CD8-positive, alpha-beta T cell (primary cell): ENCODE measurements at regions of chr11 and their contacts with region 1.

Region 1: GRCh38 chr11:615504-616319 is at the start of gene IRF7:
- DNase-seq: peak; percentile 65 to 92 (median 87)
- ATAC-seq: peak; percentile 72
- H3K4me3 ChIP-seq: peak within 1 kb of the TSS; percentile 84 to 92
- H3K4me3 Mint-ChIP-seq: peak within 1 kb of the TSS; percentile 92
- H3K27ac ChIP-seq: peak within 1 kb of the TSS; percentile 83 to 95
- H3K27ac Mint-ChIP-seq: peak within 1 kb of the TSS; percentile 94
- H3K4me1 ChIP-seq: peaks cover 30% of the 10 kb centered on the region
- H3K4me1 Mint-ChIP-seq: peaks cover 10% of the 10 kb centered on the region
- H3K27me3 ChIP-seq: no peaks in the 10 kb centered on the region
- H3K27me3 Mint-ChIP-seq: no peaks in the 10 kb centered on the region
- CTCF ChIP-seq: no peak
- total RNA-seq, gene IRF7: 102 to 106 TPM

Region 2: DNA sequence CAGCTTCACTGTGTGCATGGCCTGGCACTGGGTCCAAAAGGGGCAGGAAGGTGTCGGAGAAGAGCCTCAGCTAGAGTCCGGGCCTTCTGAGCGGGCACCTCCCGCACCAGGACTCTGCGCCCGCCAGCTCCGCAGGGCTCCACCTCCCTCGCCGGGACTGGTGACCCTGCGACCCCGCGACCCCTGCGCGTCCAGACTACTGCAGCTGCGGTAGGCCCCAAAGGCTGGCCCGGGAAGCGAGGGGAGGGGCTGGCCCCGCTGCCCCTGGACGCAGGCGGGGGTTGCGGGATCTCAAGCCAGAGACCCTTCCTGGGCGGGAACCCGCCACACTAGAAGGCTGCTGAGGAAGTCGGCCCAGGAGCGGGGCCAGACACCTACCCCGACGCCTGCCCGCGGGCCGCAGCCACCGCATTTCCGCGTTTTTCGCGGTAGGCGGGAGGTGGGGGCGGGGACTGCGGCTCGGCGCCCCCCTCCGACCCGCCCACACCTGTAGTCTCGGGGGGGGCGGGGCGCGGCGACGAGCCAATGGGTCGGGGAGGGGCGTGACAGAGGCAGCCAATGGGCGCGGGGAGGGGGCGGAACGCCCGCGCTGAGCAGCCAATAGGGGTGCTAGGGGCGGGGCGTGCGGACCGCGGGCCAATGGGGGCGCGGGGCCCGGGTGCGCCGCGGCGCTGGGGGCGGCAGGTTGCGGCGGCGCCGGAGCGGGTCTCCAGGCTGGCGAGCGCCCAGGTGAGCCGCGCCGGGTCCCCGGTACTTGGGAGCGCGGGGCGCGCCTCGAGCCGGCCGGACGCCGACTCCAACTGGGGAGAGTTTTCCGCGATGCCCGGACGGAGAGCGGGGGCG is 55.2 kb before region 1 on chr11 and contains the starts of genes LMNTD2 and RASSF7:
- CTCF ChIA-PET with region 1: no interaction called
- POLR2A ChIA-PET with region 1: no interaction called
- intact Hi-C with region 1: loop called (anchors 1 to 2 kb)
- DNase-seq: peak; percentile 92 to 98 (median 95)
- ATAC-seq: peak; percentile 94
- H3K4me3 ChIP-seq: peak within 1 kb of the TSS; percentile 51 to 94
- H3K4me3 Mint-ChIP-seq: peak within 1 kb of the TSS; percentile 88
- H3K27ac ChIP-seq: peak within 1 kb of the TSS; percentile 51 to 76
- H3K27ac Mint-ChIP-seq: peak within 1 kb of the TSS; percentile 84
- H3K4me1 ChIP-seq: peaks cover 19% of the 10 kb centered on the region
- H3K4me1 Mint-ChIP-seq: peaks cover 18% of the 10 kb centered on the region
- H3K27me3 ChIP-seq: no peaks in the 10 kb centered on the region
- H3K27me3 Mint-ChIP-seq: no peaks in the 10 kb centered on the region
- CTCF ChIP-seq: no peak
- total RNA-seq, gene LMNTD2: 4.2 to 5.6 TPM
- total RNA-seq, gene RASSF7: 11.8 to 15.3 TPM

Region 3: DNA sequence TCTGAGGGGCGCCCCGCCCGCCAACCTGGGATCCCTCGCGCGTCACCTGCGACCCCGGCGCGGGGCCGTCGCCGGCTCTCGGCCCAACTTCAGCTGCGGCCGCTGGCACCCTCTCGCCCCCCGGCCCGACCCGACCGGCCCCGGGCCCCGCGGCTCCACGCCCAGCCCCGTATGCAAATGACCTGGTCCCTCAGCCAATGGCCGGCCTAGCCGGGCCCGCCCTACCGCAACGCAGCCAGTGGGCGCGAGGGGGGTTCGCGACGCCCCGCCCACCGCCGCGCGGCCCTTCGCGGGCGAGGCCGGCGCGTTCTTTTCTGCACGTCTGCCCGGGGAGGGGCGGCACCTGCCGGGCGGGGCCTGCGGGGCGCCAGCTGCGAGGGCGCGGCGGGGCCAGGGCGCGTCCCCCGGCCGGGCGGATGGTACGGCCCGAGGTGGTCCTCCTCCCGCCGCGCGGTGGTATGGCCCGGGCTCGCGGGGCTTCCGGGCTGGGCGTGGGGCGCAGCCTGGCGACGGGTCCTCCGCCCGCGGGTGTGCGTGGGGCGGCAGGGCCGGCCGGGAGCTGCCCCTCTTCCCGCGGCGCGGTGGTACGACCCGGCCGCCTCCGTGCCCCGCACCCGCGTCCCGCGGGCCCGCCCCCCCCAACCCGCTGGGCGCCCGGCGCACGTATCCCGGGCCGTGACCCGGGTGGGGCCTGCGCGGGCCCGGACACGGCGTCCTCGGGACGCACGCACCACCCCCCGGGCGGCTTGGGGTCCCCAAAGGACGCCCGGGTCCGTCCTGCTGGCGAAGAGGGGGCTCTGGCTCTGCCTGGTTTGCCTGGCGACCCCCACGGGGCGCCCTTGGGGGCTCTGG is 47.2 kb before region 1 on chr11:
- CTCF ChIA-PET with region 1: no interaction called
- POLR2A ChIA-PET with region 1: no interaction called
- intact Hi-C with region 1: loop called in 1 of 2 experiments (anchors 2 kb)
- DNase-seq: peak; percentile 82 to 97 (median 92)
- ATAC-seq: peak; percentile 92
- H3K4me3 ChIP-seq: peak overlapping the region; percentile 64 to 71
- H3K4me3 Mint-ChIP-seq: peak overlapping the region; percentile 80
- H3K27ac ChIP-seq: peak overlapping the region; percentile 45 to 68
- H3K27ac Mint-ChIP-seq: peak overlapping the region; percentile 64
- H3K4me1 ChIP-seq: peaks cover 8% of the 10 kb centered on the region
- H3K4me1 Mint-ChIP-seq: peaks cover 11% of the 10 kb centered on the region
- H3K27me3 ChIP-seq: no peaks in the 10 kb centered on the region
- H3K27me3 Mint-ChIP-seq: no peaks in the 10 kb centered on the region
- CTCF ChIP-seq: no peak

Region 4: GRCh38 chr11:587978-588380 is 27.7 kb before region 1 on chr11:
- CTCF ChIA-PET with region 1: interaction called, 3 read pairs
- POLR2A ChIA-PET with region 1: no interaction called
- intact Hi-C with region 1: loop called in 1 of 2 experiments (anchors 1 kb)
- DNase-seq: peak; percentile 42 to 95 (median 81)
- ATAC-seq: peak; percentile 95
- H3K4me3 ChIP-seq: peak overlapping the region in 1 of 2 experiments; percentile 3
- H3K4me3 Mint-ChIP-seq: peak overlapping the region; percentile 69
- H3K27ac ChIP-seq: peak overlapping the region; percentile 60 to 76
- H3K27ac Mint-ChIP-seq: peak overlapping the region; percentile 99
- H3K4me1 ChIP-seq: peaks cover 20% of the 10 kb centered on the region
- H3K4me1 Mint-ChIP-seq: peaks cover 29% of the 10 kb centered on the region
- H3K27me3 ChIP-seq: no peaks in the 10 kb centered on the region
- H3K27me3 Mint-ChIP-seq: no peaks in the 10 kb centered on the region
- CTCF ChIP-seq: no peak

Region 5: DNA sequence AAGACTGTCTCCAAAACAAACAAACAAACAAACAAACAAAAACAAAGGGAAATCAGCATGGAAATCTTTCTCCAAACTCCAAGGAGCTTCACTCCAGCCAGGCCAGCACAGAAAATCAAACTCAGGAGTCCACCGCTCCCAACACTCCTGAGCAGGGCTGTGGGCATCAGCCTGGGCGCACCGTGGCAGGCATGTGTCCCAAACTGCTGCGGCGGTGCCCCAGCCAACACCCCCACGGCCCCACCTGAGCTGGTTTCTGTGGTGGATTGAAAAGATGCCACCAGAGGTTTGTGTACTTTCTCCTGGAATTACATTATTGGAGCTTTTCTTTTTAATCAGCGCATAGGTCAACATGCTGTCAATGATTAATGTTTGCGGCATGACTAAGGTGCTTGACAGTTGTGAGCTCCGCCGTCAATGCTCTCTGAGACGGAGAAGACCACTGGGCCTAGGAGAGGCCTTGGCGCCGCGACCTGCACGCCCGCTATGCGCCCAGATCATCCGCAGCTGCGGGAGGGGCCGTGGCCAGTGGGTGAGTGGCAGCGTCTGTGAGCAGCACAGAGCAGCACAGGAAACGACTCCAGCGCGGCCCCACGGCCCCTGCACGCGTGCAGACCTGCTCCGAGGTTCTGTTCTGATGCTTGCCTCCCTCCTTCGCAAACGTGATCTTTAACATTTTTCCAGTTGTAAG is 39.5 kb after region 1 on chr11:
- CTCF ChIA-PET with region 1: no interaction called
- POLR2A ChIA-PET with region 1: no interaction called
- intact Hi-C with region 1: no loop called
- DNase-seq: no peak
- ATAC-seq: no peak
- H3K4me3 ChIP-seq: no peak overlapping the region
- H3K4me3 Mint-ChIP-seq: no peak overlapping the region
- H3K27ac ChIP-seq: no peak overlapping the region
- H3K27ac Mint-ChIP-seq: no peak overlapping the region
- H3K4me1 ChIP-seq: no peaks in the 10 kb centered on the region
- H3K4me1 Mint-ChIP-seq: no peaks in the 10 kb centered on the region
- H3K27me3 ChIP-seq: no peaks in the 10 kb centered on the region
- H3K27me3 Mint-ChIP-seq: no peaks in the 10 kb centered on the region
- CTCF ChIP-seq: no peak